ENCODE measurements at regions of chr2 and their contacts with region 1.

Region 1: DNA sequence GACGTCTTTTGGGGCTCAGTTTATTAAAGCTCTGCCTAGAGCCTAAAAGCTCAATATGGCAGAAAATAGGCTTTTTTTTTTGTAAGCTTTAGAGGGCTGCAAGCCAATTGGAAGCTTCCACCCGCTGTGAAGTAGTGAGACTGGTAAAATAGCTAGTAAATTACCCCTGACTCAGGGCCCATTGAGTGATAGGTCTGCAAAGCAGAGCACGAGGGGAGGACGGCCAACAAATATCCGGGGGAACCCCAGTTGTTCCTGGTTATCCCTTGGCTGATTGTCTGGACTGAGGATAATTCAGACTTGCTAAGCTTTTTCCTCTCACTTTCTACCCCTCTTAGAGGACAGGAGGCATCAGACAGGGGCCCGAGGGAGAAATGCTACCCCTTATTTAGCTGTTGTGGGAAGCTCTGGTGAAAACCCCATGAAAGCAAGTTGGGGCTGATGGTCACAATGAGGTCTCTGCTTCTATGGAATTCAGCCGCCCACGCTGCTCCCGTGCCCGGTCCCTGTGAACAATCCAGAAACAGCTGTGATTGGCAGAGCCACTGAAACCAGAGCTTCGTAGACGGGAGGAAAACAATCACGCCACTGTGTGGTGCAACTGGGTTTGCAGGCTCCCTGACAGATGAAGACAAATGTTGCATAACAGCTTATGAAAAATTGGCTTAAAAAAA is 141.9 kb upstream of the LGALSL start:
- DNase-seq: peak; percentile 79
- H3K4me3 ChIP-seq: no peak overlapping the region
- H3K27ac ChIP-seq: no peak overlapping the region
- H3K4me1 ChIP-seq: no peaks in the 10 kb centered on the region
- H3K27me3 ChIP-seq: no peaks in the 10 kb centered on the region
- CTCF ChIP-seq: peak; percentile 52

Region 2: GRCh38 chr2:64133828-64134227 is 178.3 kb before region 1 on chr2:
- intact Hi-C with region 1: no loop called
- DNase-seq: no peak
- H3K4me3 ChIP-seq: no peak overlapping the region
- H3K27ac ChIP-seq: no peak overlapping the region
- H3K4me1 ChIP-seq: peaks cover 9% of the 10 kb centered on the region
- H3K27me3 ChIP-seq: no peaks in the 10 kb centered on the region
- CTCF ChIP-seq: no peak

Region 3: GRCh38 chr2:64157792-64158191 is 154.3 kb before region 1 on chr2:
- intact Hi-C with region 1: loop called (anchors 10 kb)
- DNase-seq: no peak
- H3K4me3 ChIP-seq: no peak overlapping the region
- H3K27ac ChIP-seq: no peak overlapping the region
- H3K4me1 ChIP-seq: no peaks in the 10 kb centered on the region
- H3K27me3 ChIP-seq: no peaks in the 10 kb centered on the region
- CTCF ChIP-seq: no peak